ENCODE measurements at regions of chr10 and their contacts with region 1.

Region 1: GRCh38 chr10:75235375-75236177 is at the start of gene COMTD1:
- DNase-seq: peak; percentile 91 to 98 (median 95)
- ATAC-seq: peak; percentile 59 to 82 (median 81)
- H3K4me3 ChIP-seq: peak within 1 kb of the TSS; percentile 64 to 99 (median 81)
- H3K27ac ChIP-seq: peak within 1 kb of the TSS; percentile 66 to 93 (median 84)
- H3K4me1 ChIP-seq: peaks cover 0 to 30% (median 15%) of the 10 kb centered on the region in 12 donors
- H3K27me3 ChIP-seq: no peaks in the 10 kb centered on the region
- CTCF ChIP-seq: peak; percentile 100
- POLR2A ChIP-seq: peak in 1 of 2 donors; percentile 44
- total RNA-seq, gene COMTD1: 20.8 to 75.0 (median 37.0) TPM

Region 2: GRCh38 chr10:74244097-74244685 is 991.4 kb before region 1 on chr10:
- intact Hi-C with region 1: loop called in 9 of 10 experiments (anchors 2 to 10 kb)
- DNase-seq: no peak
- ATAC-seq: no peak
- H3K4me3 ChIP-seq: no peak overlapping the region
- H3K27ac ChIP-seq: no peak overlapping the region
- H3K4me1 ChIP-seq: no peaks in the 10 kb centered on the region
- H3K27me3 ChIP-seq: no peaks in the 10 kb centered on the region
- CTCF ChIP-seq: peak; percentile 34 to 68 (median 56)
- POLR2A ChIP-seq: no peak

Region 3: GRCh38 chr10:74262856-74263255 is 972.7 kb before region 1 on chr10:
- intact Hi-C with region 1: loop called in 6 of 10 experiments (anchors 2 to 5 kb)
- DNase-seq: no peak
- ATAC-seq: no peak
- H3K4me3 ChIP-seq: no peak overlapping the region
- H3K27ac ChIP-seq: no peak overlapping the region
- H3K4me1 ChIP-seq: peaks cover 0 to 4% (median 0%) of the 10 kb centered on the region in 12 donors
- H3K27me3 ChIP-seq: no peaks in the 10 kb centered on the region
- CTCF ChIP-seq: no peak
- POLR2A ChIP-seq: no peak

Region 4: GRCh38 chr10:75019370-75019769 is 216.2 kb before region 1 on chr10:
- intact Hi-C with region 1: loop called in 1 of 10 experiments (anchors 10 kb)
- DNase-seq: no peak
- ATAC-seq: no peak
- H3K4me3 ChIP-seq: no peak overlapping the region
- H3K27ac ChIP-seq: no peak overlapping the region
- H3K4me1 ChIP-seq: peaks cover 0 to 35% (median 11%) of the 10 kb centered on the region in 12 donors
- H3K27me3 ChIP-seq: no peaks in the 10 kb centered on the region
- CTCF ChIP-seq: peak in 8 of 12 donors; percentile 19 to 49 (median 34)
- POLR2A ChIP-seq: no peak

Region 5: GRCh38 chr10:75187961-75188426 is 47.6 kb before region 1 on chr10:
- intact Hi-C with region 1: loop called (anchors 1 to 5 kb)
- DNase-seq: peak in 4 of 5 donors; percentile 40 to 47 (median 44)
- ATAC-seq: peak in 3 of 4 donors; percentile 32 to 57 (median 52)
- H3K4me3 ChIP-seq: no peak overlapping the region
- H3K27ac ChIP-seq: no peak overlapping the region
- H3K4me1 ChIP-seq: peaks cover 0 to 24% (median 10%) of the 10 kb centered on the region in 12 donors
- H3K27me3 ChIP-seq: no peaks in the 10 kb centered on the region
- CTCF ChIP-seq: peak; percentile 51 to 79 (median 69)
- POLR2A ChIP-seq: no peak